ENCODE measurements at regions of chr17 and their contacts with region 1.

Region 1: GRCh38 chr17:412211-413015 is 59.8 kb upstream of the RPH3AL start:
- DNase-seq: peak; percentile 43

Region 2: GRCh38 chr17:491086-492021 is 78.9 kb after region 1 on chr17:
- CTCF ChIA-PET with region 1: no interaction called
- POLR2A ChIA-PET with region 1: no interaction called
- DNase-seq: peak; percentile 61

Region 3: GRCh38 chr17:700504-701094 is 288.2 kb after region 1 on chr17:
- CTCF ChIA-PET with region 1: interaction called, 15 read pairs
- POLR2A ChIA-PET with region 1: no interaction called
- DNase-seq: peak; percentile 43